ENCODE measurements at regions of chr7 and their contacts with region 1.

Region 1: GRCh38 chr7:50304911-50305582 is 531 bp downstream of the IKZF1 start:
- DNase-seq: peak in 1 of 4 experiments; percentile 67
- ATAC-seq: peak; percentile 55
- H3K4me3 ChIP-seq: peak overlapping the region; percentile 70
- H3K27ac ChIP-seq: peak overlapping the region; percentile 80
- H3K4me1 ChIP-seq: peaks cover 20 to 24% of the 10 kb centered on the region in 2 experiments
- H3K27me3 ChIP-seq: no peaks in the 10 kb centered on the region
- CTCF ChIP-seq: 0 out of 6 replicates have a peak, but pooled peaks of 1 of the 3 experiments have one; percentile 0
- EP300 ChIP-seq: no peak
- POLR2A ChIP-seq: no peak
- RAD21 ChIP-seq: no peak

Region 2: GRCh38 chr7:50206453-50207250 is 98.4 kb before region 1 on chr7:
- CTCF ChIA-PET with region 1: no interaction called
- POLR2A ChIA-PET with region 1: no interaction called
- in situ Hi-C with region 1: loop called (anchors 5 kb)
- intact Hi-C with region 1: loop called (anchors 2 kb)
- DNase-seq: no peak
- ATAC-seq: no peak
- H3K4me3 ChIP-seq: no peak overlapping the region
- H3K27ac ChIP-seq: no peak overlapping the region
- H3K4me1 ChIP-seq: peaks cover 8 to 10% of the 10 kb centered on the region in 2 experiments
- H3K27me3 ChIP-seq: no peaks in the 10 kb centered on the region; a peak in 1 of 5 replicates
- CTCF ChIP-seq: no peak
- EP300 ChIP-seq: no peak
- POLR2A ChIP-seq: no peak
- RAD21 ChIP-seq: no peak

Region 3: GRCh38 chr7:50229964-50230363 is 75.1 kb before region 1 on chr7:
- CTCF ChIA-PET with region 1: no interaction called
- POLR2A ChIA-PET with region 1: no interaction called
- in situ Hi-C with region 1: no loop called
- intact Hi-C with region 1: loop called (anchors 5 kb)
- DNase-seq: peak; percentile 34 to 62 (median 41)
- ATAC-seq: no peak
- H3K4me3 ChIP-seq: no peak overlapping the region
- H3K27ac ChIP-seq: no peak overlapping the region
- H3K4me1 ChIP-seq: peaks cover 9 to 16% of the 10 kb centered on the region in 2 experiments
- H3K27me3 ChIP-seq: no peaks in the 10 kb centered on the region
- CTCF ChIP-seq: peak; percentile 29 to 66 (median 65); a peak in 5 of 6 replicates
- EP300 ChIP-seq: no peak
- POLR2A ChIP-seq: no peak
- RAD21 ChIP-seq: peak; percentile 33 to 74; a peak in 3 of 4 replicates

Region 4: DNA sequence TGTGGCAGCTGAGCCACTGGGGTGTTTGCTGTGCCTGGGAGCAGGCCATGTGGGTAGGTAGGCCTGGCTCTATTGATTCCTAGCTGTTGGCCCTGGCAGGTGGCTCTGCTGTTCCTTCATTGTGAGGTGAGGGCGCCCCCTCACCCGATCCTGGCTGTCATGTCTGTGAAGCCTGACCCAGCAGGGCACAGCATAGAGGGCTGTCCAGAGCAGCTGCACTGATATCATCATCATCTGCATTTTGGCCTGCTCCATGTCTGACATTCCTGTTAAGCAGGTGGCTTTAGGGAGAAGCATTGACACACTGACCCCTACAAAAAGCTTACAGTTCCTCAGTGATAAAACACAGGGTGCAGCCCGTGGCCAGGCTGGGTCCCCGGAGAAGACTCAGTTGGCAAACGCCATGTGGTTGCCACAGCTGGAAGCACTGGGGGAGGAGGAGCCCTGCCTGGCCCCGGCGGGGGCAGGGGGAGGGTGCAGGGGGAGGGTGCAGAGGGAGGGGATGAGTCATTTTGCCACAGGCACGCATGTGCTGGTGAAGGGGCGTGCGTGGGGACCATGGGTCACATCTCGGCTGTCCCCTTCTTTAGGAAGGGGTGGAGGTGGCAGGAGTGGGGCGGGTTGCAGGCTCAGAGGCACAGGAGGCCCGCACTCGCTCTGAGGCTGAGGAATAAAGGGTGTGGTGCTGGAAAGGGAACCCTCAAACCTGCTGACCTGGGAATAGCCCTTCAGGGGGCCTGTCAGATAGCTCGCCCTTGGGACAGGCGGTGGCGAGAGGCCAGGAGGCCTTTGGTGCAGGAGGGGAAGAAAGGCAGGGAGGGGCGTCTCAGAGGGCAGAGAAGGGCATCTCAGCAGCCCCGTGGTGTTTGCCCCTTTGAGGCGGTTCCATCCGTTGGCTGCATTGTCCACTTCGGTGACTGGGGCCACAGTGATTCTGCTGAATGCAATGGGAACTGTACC is 31.0 kb after region 1 on chr7:
- CTCF ChIA-PET with region 1: no interaction called
- POLR2A ChIA-PET with region 1: interaction called, 3 read pairs
- in situ Hi-C with region 1: no loop called
- intact Hi-C with region 1: loop called (anchors 2 kb)
- DNase-seq: peak; percentile 79 to 89 (median 85)
- ATAC-seq: peak; percentile 50
- H3K4me3 ChIP-seq: no peak overlapping the region
- H3K27ac ChIP-seq: peak overlapping the region; percentile 74
- H3K4me1 ChIP-seq: peaks cover 58 to 97% of the 10 kb centered on the region in 2 experiments
- H3K27me3 ChIP-seq: no peaks in the 10 kb centered on the region; a peak in 1 of 5 replicates
- CTCF ChIP-seq: peak; percentile 15 to 25 (median 19); a peak in 2 of 6 replicates
- EP300 ChIP-seq: no peak
- POLR2A ChIP-seq: no peak
- RAD21 ChIP-seq: no peak

Region 5: DNA sequence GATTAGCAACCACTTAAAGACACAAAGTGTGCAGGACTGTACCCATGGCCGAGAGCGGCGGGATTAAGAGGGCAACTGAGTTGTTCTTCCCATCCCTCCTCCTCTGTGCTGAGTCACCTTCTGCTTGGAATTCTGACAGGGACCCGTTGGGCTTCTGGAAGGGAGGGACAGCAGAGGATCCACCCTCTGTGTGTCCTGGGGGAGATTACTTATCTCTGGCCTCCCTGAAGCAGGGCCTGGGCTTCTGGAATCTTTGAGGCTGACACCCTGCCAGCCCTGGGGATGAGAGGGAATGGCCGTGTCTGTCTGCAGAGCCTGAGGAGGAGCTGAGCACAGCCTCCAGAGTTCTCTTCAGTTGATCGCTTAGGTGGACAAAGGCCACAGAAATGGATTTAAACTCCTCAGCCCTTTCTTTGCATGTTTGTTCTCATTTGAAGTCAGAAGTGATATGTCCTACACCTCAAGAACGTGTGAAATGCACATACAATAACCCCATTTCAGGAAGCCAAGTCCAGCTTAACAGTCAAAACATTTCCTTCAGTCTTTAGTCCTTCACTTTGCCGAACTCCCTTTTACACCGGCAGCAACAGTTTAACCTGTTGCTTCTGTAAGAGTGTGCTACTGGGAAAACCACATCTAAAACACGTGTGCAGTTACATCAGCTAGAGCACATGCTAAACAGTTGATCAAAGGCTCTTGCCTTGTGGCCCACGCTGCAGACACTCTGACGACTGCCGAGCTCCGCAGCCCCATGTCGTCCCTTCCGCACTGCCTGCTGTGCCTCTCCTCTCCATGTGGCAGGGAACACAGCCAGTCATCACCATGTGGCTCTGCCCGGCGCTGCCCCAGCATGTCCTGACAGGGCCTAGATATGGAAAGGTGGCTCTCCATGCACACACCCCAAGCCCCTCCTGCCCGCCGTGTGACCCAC is 55.2 kb after region 1 on chr7:
- CTCF ChIA-PET with region 1: no interaction called
- POLR2A ChIA-PET with region 1: interaction called, 3 read pairs
- in situ Hi-C with region 1: no loop called
- intact Hi-C with region 1: loop called (anchors 2 kb)
- DNase-seq: peak; percentile 83 to 88 (median 86)
- ATAC-seq: peak; percentile 64
- H3K4me3 ChIP-seq: no peak overlapping the region
- H3K27ac ChIP-seq: peak overlapping the region; percentile 77
- H3K4me1 ChIP-seq: peaks cover 49 to 72% of the 10 kb centered on the region in 2 experiments
- H3K27me3 ChIP-seq: no peaks in the 10 kb centered on the region
- CTCF ChIP-seq: no peak
- EP300 ChIP-seq: peak; percentile 86
- POLR2A ChIP-seq: no peak
- RAD21 ChIP-seq: peak in 1 of 2 experiments; percentile 15; a peak in 1 of 4 replicates

Region 6: DNA sequence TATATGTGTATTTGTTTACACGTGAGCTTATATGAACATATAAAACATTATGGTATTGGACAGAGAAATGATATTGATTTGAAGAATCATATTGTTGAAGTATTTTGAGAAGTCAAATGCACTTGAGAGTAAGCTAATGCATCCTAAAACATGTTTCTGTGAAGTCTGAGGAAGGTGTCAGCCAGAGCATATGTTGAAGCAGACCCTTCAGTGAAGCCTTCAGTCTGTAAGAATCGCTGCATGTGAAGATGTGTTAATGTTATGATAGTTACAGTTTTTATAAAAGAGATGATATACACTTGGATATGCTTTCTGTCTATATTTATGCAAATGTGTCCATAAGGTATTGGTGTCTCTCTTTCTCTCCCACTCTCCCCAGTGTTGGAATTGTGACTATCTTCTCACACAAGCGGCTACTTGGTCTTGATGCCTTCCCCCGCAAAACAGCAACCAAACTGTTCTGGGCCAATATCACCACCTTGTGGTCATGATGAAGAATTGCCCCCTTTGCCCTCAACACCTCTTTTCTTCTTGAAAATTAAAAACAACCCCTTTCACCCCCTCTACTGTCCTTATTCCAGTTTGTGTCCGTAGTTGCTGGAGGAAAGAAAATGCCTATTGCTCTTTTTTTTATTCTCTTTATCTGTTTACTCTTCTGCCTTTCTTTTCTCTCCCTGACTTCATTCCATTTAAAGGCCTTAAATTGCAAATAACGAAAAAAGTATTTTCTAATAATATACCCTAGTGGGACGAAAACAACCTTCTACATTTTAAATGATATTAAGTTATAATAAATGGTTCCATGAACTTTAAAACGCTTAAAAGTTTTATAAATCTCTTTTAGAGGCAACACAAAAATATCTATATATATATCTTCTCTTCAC is 64.3 kb after region 1 on chr7:
- CTCF ChIA-PET with region 1: no interaction called
- POLR2A ChIA-PET with region 1: no interaction called
- in situ Hi-C with region 1: no loop called
- intact Hi-C with region 1: loop called (anchors 1 kb)
- DNase-seq: peak; percentile 70 to 88 (median 71)
- ATAC-seq: peak; percentile 90
- H3K4me3 ChIP-seq: no peak overlapping the region
- H3K27ac ChIP-seq: no peak overlapping the region
- H3K4me1 ChIP-seq: peaks cover 0 to 2% of the 10 kb centered on the region in 2 experiments; a peak in 1 of 5 replicates
- H3K27me3 ChIP-seq: no peaks in the 10 kb centered on the region
- CTCF ChIP-seq: peak; percentile 89 to 95 (median 92)
- EP300 ChIP-seq: no peak
- POLR2A ChIP-seq: no peak
- RAD21 ChIP-seq: peak; percentile 96 to 98